Dendritic cell treated with granulocyte-macrophage colony-stimulating factor and Interleukin-4, amounts not matched to agents 40 ng/mL and 50 ng/mL, for 4 days (primary cell): ENCODE measurements at regions of chr11 and their contacts with region 1.

Region 1: GRCh38 chr11:90373971-90374370 is 151.1 kb upstream of the CHORDC1 start:
- H3K4me3 Mint-ChIP-seq: no peak overlapping the region
- H3K27ac Mint-ChIP-seq: no peak overlapping the region
- H3K4me1 Mint-ChIP-seq: no peaks in the 10 kb centered on the region
- H3K27me3 Mint-ChIP-seq: no peaks in the 10 kb centered on the region

Region 2: DNA sequence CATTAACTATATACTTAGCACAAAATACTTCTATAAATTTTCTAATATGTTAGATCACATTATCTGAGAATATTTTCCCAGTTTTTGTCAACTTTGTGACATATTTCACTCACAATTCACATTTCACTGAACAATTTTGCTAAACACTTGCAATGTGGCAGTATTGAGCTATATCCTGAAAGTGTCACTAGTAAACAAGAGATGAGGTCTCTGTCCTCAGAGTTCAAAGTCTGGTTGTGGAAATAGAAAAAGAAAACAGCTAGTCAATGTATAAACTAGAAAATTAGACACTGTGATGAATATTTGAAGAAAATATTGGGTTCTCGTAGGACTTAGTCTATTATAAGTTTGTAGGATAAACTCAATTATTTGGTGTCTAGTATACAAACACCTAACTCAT is 63.8 kb before region 1 on chr11:
- intact Hi-C with region 1: loop called (anchors 10 kb)
- H3K4me3 Mint-ChIP-seq: no peak overlapping the region
- H3K27ac Mint-ChIP-seq: no peak overlapping the region
- H3K4me1 Mint-ChIP-seq: no peaks in the 10 kb centered on the region
- H3K27me3 Mint-ChIP-seq: no peaks in the 10 kb centered on the region

Region 3: GRCh38 chr11:90556606-90557005 is 182.6 kb after region 1 on chr11:
- intact Hi-C with region 1: no loop called
- H3K4me3 Mint-ChIP-seq: no peak overlapping the region
- H3K27ac Mint-ChIP-seq: no peak overlapping the region
- H3K4me1 Mint-ChIP-seq: no peaks in the 10 kb centered on the region
- H3K27me3 Mint-ChIP-seq: no peaks in the 10 kb centered on the region